ENCODE measurements at regions of chr20 and their contacts with region 1.

Region 1: DNA sequence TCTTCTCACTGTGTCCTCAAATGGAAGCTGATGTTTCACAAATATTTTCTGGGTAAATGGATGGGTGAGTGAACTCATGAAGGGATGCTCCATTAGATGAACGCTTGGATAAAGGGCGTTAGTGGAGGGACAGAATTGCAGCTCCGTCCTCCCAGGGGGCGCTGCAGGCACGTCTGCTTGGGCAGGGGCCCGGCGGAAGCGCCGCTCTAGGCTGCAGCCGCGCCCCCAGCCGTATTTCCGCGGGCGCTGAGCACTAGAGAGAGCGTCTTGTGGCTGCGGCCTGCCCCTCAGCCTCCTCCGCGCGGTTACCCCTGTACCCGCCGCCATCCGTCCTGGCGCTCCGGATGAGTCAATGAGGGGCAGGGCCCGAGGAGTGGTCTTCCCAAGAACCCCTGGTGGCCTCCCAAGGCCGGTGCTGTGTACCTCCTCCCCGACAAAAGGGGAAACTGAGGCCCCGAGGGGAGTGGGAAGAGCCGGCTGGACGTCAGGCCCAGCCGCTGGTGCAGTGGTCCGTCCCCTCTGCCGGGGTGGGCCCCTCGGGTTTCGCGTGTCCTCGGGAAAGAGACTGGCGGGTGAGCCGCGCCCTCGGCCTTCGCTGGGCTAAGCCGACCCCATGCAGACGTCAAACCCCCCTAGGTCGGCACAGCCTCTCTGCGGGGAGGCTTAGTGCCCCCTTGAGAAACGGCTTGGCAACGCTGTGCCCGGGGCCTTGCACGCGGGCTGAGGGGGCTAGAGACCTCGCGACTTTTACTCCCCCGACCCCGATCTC is 11.5 kb upstream of the SNHG17 start:
- DNase-seq: peak; percentile 94
- ATAC-seq: peak; percentile 95
- H3K4me3 Mint-ChIP-seq: peak overlapping the region; percentile 78
- H3K27ac Mint-ChIP-seq: no peak overlapping the region
- H3K4me1 Mint-ChIP-seq: peaks cover 15% of the 10 kb centered on the region
- H3K27me3 Mint-ChIP-seq: no peaks in the 10 kb centered on the region
- CTCF ChIP-seq: peak; percentile 86

Region 2: GRCh38 chr20:38434743-38435554 is 11.7 kb before region 1 on chr20 and contains the start of gene SNHG17:
- CTCF ChIA-PET with region 1: interaction called, 65 read pairs
- POLR2A ChIA-PET with region 1: interaction called, 21 read pairs
- DNase-seq: peak; percentile 88
- ATAC-seq: peak; percentile 78
- H3K4me3 Mint-ChIP-seq: peak within 1 kb of the TSS; percentile 95
- H3K27ac Mint-ChIP-seq: peak within 1 kb of the TSS; percentile 94
- H3K4me1 Mint-ChIP-seq: peaks cover 24% of the 10 kb centered on the region
- H3K27me3 Mint-ChIP-seq: peaks cover 3% of the 10 kb centered on the region; the same call in 1 of the 2 replicates
- CTCF ChIP-seq: peak; percentile 97
- total RNA-seq, gene SNHG17: 52.0 to 71.6 TPM (median 57.4 TPM) in 3 replicates

Measured in WTC11 (cell line).